GM12878 (cell line): ENCODE measurements at regions of chr13 and their contacts with region 1.

Region 1: GRCh38 chr13:50845211-50845610 is 1.7 kb upstream of the DLEU7 start:
- DNase-seq: no peak
- ATAC-seq: no peak
- H3K4me3 ChIP-seq: no peak overlapping the region
- H3K27ac ChIP-seq: no peak overlapping the region
- H3K4me1 ChIP-seq: peaks cover 9% of the 10 kb centered on the region
- H3K27me3 ChIP-seq: no peaks in the 10 kb centered on the region
- CTCF ChIP-seq: no peak
- EP300 ChIP-seq: no peak
- POLR2A ChIP-seq: no peak
- RAD21 ChIP-seq: no peak

Region 2: DNA sequence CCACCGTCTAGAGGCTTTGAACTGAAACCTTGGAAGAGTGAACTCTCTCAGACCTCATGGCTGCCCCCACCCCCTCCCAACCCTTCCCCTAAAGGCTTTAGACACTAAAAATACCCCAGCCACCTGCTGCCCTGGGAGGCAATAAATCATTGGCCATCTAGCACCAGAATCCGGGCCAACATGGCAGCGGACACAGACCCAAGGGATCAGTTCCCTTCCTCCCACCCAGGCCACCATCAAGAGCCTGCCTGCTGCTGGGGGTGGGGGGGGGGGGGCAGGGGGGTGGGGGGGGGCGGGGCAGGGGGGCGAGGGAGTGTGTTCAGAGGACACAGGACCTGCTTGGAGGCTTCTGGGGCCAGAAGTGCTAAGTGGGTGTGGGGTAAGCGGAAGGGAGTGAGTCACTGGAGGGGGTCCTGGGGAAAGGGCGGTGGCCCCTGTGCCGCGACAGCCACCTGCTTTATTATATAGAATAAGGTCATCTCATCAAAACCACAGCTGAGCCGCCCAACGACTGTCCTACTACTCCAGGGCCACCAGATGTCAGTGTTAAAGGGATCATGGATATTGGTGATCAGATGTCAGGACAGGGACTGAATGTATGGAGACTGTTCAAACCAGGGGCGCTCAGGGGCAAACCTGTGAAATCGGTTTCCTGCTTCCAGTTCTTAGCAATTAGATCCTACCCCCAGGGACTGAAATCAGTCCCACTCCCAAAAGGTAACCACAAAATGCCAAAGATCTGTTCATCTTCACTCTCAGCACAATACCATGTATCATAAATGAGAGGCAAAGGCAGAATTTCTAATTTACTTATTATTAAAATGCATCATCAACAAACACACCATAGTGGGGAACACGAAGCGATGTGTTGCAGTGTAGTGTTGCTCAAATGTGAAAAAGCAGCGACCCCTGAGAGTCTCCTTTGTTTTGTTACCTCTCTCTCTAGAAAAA is 1192.6 kb before region 1 on chr13:
- CTCF ChIA-PET with region 1: no interaction called
- POLR2A ChIA-PET with region 1: no interaction called
- RAD21 ChIA-PET with region 1: no interaction called
- SMC1A ChIA-PET with region 1: no interaction called
- in situ Hi-C with region 1: no loop called
- intact Hi-C with region 1: loop called (anchors 5 kb)
- DNase-seq: no peak
- ATAC-seq: peak; percentile 64
- H3K4me3 ChIP-seq: no peak overlapping the region
- H3K27ac ChIP-seq: no peak overlapping the region
- H3K4me1 ChIP-seq: no peaks in the 10 kb centered on the region
- H3K27me3 ChIP-seq: no peaks in the 10 kb centered on the region
- CTCF ChIP-seq: peak; percentile 29 to 37 (median 33); a peak in 4 of 6 replicates
- EP300 ChIP-seq: no peak
- POLR2A ChIP-seq: no peak
- RAD21 ChIP-seq: peak; percentile 48